ENCODE measurements at regions of chr9 and their contacts with region 1.

Region 1: GRCh38 chr9:127214421-127215267 is 49.9 kb upstream of the GARNL3 start:
- DNase-seq: peak in 8 of 9 donors; percentile 37 to 62 (median 48)
- ATAC-seq: peak; percentile 84
- H3K4me3 ChIP-seq: no peak overlapping the region
- H3K4me3 Mint-ChIP-seq: no peak overlapping the region
- H3K27ac ChIP-seq: no peak overlapping the region
- H3K27ac Mint-ChIP-seq: no peak overlapping the region
- H3K4me1 ChIP-seq: no peaks in the 10 kb centered on the region
- H3K4me1 Mint-ChIP-seq: peaks cover 0 to 5% (median 0%) of the 10 kb centered on the region in 7 donors
- H3K27me3 ChIP-seq: no peaks in the 10 kb centered on the region
- H3K27me3 Mint-ChIP-seq: peaks cover 0 to 16% (median 4%) of the 10 kb centered on the region in 5 donors

Region 2: DNA sequence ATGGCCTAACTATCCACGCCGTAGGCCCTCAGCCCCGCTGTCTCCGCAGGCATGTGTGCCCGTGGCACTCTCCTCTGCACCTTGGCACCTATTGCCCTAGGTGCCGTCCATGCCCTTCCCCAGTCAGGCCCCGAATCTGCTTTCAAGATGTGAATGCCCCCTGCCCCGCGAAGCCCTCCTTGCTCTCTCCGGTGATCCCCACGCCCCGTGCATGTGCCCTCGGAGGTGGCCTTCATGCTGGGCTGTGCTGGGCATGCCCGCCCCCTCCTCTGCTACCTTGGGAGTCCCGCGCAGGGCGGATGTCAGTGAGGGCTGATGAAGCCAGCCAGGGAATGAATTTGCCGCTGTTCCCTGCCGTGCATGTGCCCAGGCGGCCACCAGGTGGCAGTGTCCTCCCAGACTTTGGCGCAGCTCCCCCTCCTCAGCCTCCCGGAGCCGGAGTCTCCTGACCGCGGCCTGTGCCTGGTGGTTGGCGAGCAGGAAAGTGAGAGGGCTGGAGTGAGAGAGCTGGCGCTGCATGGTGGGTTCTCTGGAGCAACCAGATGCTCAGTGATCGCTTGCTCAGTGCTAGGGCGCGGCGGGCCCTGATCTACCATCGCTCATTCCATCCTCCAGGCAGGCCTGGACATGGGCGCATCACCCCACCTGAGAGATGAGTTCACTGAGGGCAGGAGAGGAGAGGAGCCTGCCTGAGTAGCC is 713.8 kb before region 1 on chr9:
- CTCF ChIA-PET with region 1: no interaction called
- POLR2A ChIA-PET with region 1: no interaction called
- intact Hi-C with region 1: no loop called
- DNase-seq: peak; percentile 28 to 74 (median 63)
- ATAC-seq: peak; percentile 73
- H3K4me3 ChIP-seq: no peak overlapping the region
- H3K4me3 Mint-ChIP-seq: peak overlapping the region in 8 of 10 donors; percentile 8 to 74 (median 48)
- H3K27ac ChIP-seq: no peak overlapping the region
- H3K27ac Mint-ChIP-seq: no peak overlapping the region
- H3K4me1 ChIP-seq: peaks cover 0 to 3% of the 10 kb centered on the region in 2 donors
- H3K4me1 Mint-ChIP-seq: peaks cover 0 to 8% (median 5%) of the 10 kb centered on the region in 7 donors
- H3K27me3 ChIP-seq: peaks cover 0 to 10% of the 10 kb centered on the region in 2 donors
- H3K27me3 Mint-ChIP-seq: peaks cover 4 to 21% (median 5%) of the 10 kb centered on the region in 5 donors

Region 3: DNA sequence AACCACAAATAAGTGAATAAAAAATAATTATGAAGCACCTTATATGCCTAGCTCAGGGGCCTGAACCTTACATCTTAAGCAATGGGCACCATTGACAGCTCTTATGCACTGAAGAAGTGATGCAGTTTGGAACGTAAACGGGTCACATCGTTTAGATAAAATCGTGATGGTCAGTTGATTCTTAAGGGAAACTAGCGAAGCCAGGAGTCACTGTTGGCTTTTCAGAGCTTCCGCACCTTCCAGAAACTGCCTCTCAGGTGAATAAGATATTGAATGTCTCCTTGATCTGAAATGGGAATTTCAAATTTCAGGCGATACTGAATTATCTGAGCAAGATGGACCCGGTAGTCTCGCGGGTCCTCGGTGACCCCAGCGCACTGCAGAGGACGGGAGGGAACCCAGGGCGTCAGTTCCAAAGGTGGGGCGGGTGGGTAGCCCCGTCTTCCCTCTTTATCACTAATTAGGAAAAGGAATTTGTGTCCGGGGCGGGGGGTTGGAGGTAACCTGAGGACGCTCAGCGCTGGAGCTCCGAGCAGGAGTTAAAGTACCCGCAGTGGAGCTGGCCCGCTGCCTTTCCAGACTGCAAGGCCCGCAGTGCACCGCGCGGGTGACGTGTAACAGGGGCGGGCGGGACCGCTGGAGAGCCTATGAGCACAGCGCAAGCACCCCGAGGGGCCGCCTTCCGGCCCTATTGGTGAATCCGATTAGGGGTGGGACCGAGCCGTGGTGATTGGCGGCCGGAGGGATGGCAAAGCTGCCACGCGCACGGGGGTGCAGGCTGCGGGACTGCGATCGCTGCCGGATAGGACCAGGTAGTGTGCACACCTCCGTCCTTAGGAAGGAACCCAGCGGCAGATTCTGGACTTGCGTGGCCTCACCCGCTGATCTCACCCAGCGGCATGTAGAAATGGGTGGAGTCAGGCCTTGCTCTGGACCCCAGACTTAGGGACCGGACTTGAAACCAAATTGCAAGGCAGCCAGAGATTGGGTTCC is 30.3 kb after region 1 on chr9:
- CTCF ChIA-PET with region 1: interaction called, 3 read pairs
- POLR2A ChIA-PET with region 1: no interaction called
- intact Hi-C with region 1: loop called in 1 of 2 experiments (anchors 1 kb)
- DNase-seq: peak; percentile 84 to 94 (median 91)
- ATAC-seq: peak; percentile 100
- H3K4me3 ChIP-seq: peak overlapping the region; percentile 85
- H3K4me3 Mint-ChIP-seq: peak overlapping the region; percentile 80 to 92 (median 88)
- H3K27ac ChIP-seq: no peak overlapping the region
- H3K27ac Mint-ChIP-seq: peak overlapping the region in 7 of 9 donors; percentile 28 to 80 (median 59)
- H3K4me1 ChIP-seq: peaks cover 0 to 5% of the 10 kb centered on the region in 2 donors
- H3K4me1 Mint-ChIP-seq: peaks cover 4 to 16% (median 8%) of the 10 kb centered on the region in 7 donors
- H3K27me3 ChIP-seq: no peaks in the 10 kb centered on the region
- H3K27me3 Mint-ChIP-seq: peaks cover 0 to 24% (median 4%) of the 10 kb centered on the region in 5 donors

Region 4: DNA sequence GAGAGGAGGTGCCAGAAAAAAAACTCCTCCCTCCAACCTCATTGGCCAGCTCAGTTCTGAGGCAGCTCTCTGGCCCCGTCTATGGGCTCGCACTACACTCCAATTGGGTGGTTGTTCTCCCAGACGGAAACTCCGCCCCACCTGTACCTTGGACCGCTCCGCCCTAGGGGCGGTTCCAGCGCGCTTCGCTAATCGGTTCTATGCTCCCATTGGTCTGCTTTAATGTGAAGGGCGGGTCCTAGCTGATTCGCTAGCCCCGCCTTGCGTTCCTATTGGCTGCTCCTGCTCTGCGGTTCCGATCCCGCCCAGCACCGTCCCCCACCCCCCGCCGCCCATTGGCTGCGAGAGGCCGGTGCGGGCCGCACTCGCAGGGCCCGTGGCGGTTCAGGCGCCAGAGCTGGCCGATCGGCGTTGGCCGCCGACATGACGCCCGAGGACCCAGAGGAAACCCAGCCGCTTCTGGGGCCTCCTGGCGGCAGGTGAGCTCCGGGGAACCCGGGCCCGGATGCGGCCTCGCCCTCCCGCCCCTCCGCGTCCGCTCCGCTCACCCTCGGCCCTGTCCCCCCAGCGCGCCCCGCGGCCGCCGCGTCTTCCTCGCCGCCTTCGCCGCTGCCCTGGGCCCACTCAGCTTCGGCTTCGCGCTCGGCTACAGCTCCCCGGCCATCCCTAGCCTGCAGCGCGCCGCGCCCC is 182.3 kb after region 1 on chr9 and contains the start of gene SLC2A8:
- CTCF ChIA-PET with region 1: interaction called, 6 read pairs
- POLR2A ChIA-PET with region 1: no interaction called
- intact Hi-C with region 1: loop called in 1 of 2 experiments (anchors 2 kb)
- DNase-seq: peak; percentile 33 to 87 (median 61)
- ATAC-seq: peak; percentile 97
- H3K4me3 ChIP-seq: peak within 1 kb of the TSS; percentile 22
- H3K4me3 Mint-ChIP-seq: peak within 1 kb of the TSS; percentile 50 to 82 (median 64)
- H3K27ac ChIP-seq: no peak within 1 kb of the TSS
- H3K27ac Mint-ChIP-seq: peak within 1 kb of the TSS in 2 of 9 donors; percentile 37 to 59
- H3K4me1 ChIP-seq: peaks cover 10 to 15% of the 10 kb centered on the region in 2 donors
- H3K4me1 Mint-ChIP-seq: peaks cover 11 to 25% (median 16%) of the 10 kb centered on the region in 7 donors
- H3K27me3 ChIP-seq: peaks cover 0 to 57% of the 10 kb centered on the region in 2 donors
- H3K27me3 Mint-ChIP-seq: peaks cover 51 to 80% (median 72%) of the 10 kb centered on the region in 5 donors
- total RNA-seq, gene SLC2A8: 0.27 to 4.8 (median 1.3) TPM

Region 5: GRCh38 chr9:127418037-127418471 is 203.4 kb after region 1 on chr9:
- CTCF ChIA-PET with region 1: interaction called, 3 read pairs
- POLR2A ChIA-PET with region 1: no interaction called
- intact Hi-C with region 1: loop called in 1 of 2 experiments (anchors 1 kb)
- DNase-seq: peak in 6 of 9 donors; percentile 21 to 47 (median 40)
- ATAC-seq: peak; percentile 72
- H3K4me3 ChIP-seq: no peak overlapping the region
- H3K4me3 Mint-ChIP-seq: peak overlapping the region in 2 of 10 donors; percentile 21 to 61
- H3K27ac ChIP-seq: no peak overlapping the region
- H3K27ac Mint-ChIP-seq: no peak overlapping the region
- H3K4me1 ChIP-seq: peaks cover 0 to 6% of the 10 kb centered on the region in 2 donors
- H3K4me1 Mint-ChIP-seq: peaks cover 4 to 20% (median 7%) of the 10 kb centered on the region in 7 donors
- H3K27me3 ChIP-seq: no peaks in the 10 kb centered on the region
- H3K27me3 Mint-ChIP-seq: peaks cover 22 to 31% (median 26%) of the 10 kb centered on the region in 5 donors